AG04450 (cell line): ENCODE measurements at regions of chr9 and their contacts with region 1.

Region 1: GRCh38 chr9:69193685-69194032 is 19.6 kb downstream of the TJP2 start:
- DNase-seq: no peak
- H3K4me3 ChIP-seq: no peak overlapping the region
- H3K27ac ChIP-seq: no peak overlapping the region
- H3K27me3 ChIP-seq: no peaks in the 10 kb centered on the region
- CTCF ChIP-seq: peak; percentile 13; the same call in 1 of the 2 replicates

Region 2: GRCh38 chr9:69044240-69045219 is 149.1 kb before region 1 on chr9:
- CTCF ChIA-PET with region 1: interaction called, 19 read pairs
- POLR2A ChIA-PET with region 1: no interaction called
- DNase-seq: no peak
- H3K4me3 ChIP-seq: no peak overlapping the region
- H3K27ac ChIP-seq: peak overlapping the region; percentile 39
- H3K27me3 ChIP-seq: no peaks in the 10 kb centered on the region
- CTCF ChIP-seq: no peak

Region 3: GRCh38 chr9:69063839-69064238 is 129.8 kb before region 1 on chr9:
- CTCF ChIA-PET with region 1: interaction called, 14 read pairs
- POLR2A ChIA-PET with region 1: interaction called, 4 read pairs
- DNase-seq: no peak
- H3K4me3 ChIP-seq: no peak overlapping the region
- H3K27ac ChIP-seq: no peak overlapping the region
- H3K27me3 ChIP-seq: no peaks in the 10 kb centered on the region
- CTCF ChIP-seq: no peak

Region 4: GRCh38 chr9:69155341-69156030 is 38.2 kb before region 1 on chr9:
- CTCF ChIA-PET with region 1: interaction called, 46 read pairs
- POLR2A ChIA-PET with region 1: no interaction called
- DNase-seq: no peak
- H3K4me3 ChIP-seq: no peak overlapping the region
- H3K27ac ChIP-seq: no peak overlapping the region
- H3K27me3 ChIP-seq: no peaks in the 10 kb centered on the region
- CTCF ChIP-seq: no peak

Region 5: GRCh38 chr9:69180670-69181069 is 13.0 kb before region 1 on chr9:
- CTCF ChIA-PET with region 1: interaction called, 42 read pairs
- POLR2A ChIA-PET with region 1: interaction called, 6 read pairs
- DNase-seq: peak; percentile 92
- H3K4me3 ChIP-seq: no peak overlapping the region
- H3K27ac ChIP-seq: peak overlapping the region; percentile 70
- H3K27me3 ChIP-seq: no peaks in the 10 kb centered on the region
- CTCF ChIP-seq: no peak

Region 6: GRCh38 chr9:69213647-69214046 is 20.0 kb after region 1 on chr9:
- CTCF ChIA-PET with region 1: interaction called, 22 read pairs
- POLR2A ChIA-PET with region 1: no interaction called
- DNase-seq: no peak
- H3K4me3 ChIP-seq: no peak overlapping the region
- H3K27ac ChIP-seq: no peak overlapping the region
- H3K27me3 ChIP-seq: no peaks in the 10 kb centered on the region
- CTCF ChIP-seq: no peak